OCI-LY7 (cell line): ENCODE measurements at regions of chr11 and their contacts with region 1.

Region 1: DNA sequence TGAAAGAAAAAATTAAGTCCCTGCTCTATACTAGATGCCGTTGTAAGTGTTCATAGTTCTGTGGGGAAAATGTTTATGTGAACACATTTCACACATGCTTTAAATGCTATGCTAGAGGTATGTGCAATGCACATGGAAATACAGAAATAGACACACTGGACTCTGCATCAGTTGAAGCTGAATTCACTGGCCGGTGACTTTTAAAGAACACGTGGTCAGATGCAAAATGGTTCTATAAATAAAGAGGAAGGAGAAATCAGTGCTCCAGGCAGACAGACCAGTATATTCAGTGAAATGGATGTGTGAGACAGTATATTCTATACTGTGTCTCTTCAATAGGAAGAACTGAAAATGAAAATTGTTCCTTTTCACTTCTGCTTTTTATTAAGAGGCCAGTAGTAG is 29.9 kb downstream of the TRPC6 start:
- DNase-seq: peak; percentile 93
- H3K4me3 ChIP-seq: peak overlapping the region; percentile 40
- H3K27ac ChIP-seq: peak overlapping the region; percentile 97
- H3K4me1 ChIP-seq: peaks cover 47% of the 10 kb centered on the region
- CTCF ChIP-seq: no peak

Region 2: DNA sequence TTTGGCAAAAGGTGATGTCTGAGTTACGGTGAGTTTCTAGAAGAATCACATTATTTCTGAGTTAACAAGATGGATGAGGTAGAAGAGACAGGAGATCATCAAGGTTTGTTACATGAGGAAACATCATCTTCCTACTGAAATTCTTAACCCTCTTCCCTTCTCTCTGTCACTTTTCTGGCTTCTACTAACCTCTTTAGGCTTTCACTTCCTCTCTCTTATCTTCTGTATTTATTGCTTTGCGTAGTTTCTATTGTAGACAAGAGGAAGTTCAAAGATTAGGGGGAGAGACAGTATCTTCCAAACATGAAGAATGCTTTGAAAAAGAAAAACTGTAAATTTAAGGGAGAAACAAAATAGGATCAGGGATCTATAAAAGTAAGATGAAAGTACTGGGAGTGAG is 45.5 kb before region 1 on chr11:
- CTCF ChIA-PET with region 1: no interaction called
- POLR2A ChIA-PET with region 1: interaction called, 8 read pairs
- intact Hi-C with region 1: loop called (anchors 5 kb)
- DNase-seq: peak; percentile 62
- H3K4me3 ChIP-seq: no peak overlapping the region
- H3K27ac ChIP-seq: peak overlapping the region; percentile 60
- H3K4me1 ChIP-seq: peaks cover 34% of the 10 kb centered on the region
- CTCF ChIP-seq: no peak